ENCODE measurements at regions of chr12 and their contacts with region 1.

Region 1: GRCh38 chr12:123580772-123581171 is 3.6 kb upstream of the TMED2 start:
- H3K4me3 ChIP-seq: no peak overlapping the region
- H3K27ac ChIP-seq: no peak overlapping the region
- H3K4me1 ChIP-seq: 0 out of 2 replicates have a peak, but pooled peaks cover 3% of the 10 kb centered on the region
- CTCF ChIP-seq: no peak

Region 2: GRCh38 chr12:123388177-123388947 is 192.4 kb before region 1 on chr12:
- CTCF ChIA-PET with region 1: interaction called, 10 read pairs
- POLR2A ChIA-PET with region 1: no interaction called
- H3K4me3 ChIP-seq: peak overlapping the region; percentile 52
- H3K27ac ChIP-seq: no peak overlapping the region; the same call in 1 of the 2 replicates
- H3K4me1 ChIP-seq: peaks cover 2% of the 10 kb centered on the region; the same call in 1 of the 2 replicates
- CTCF ChIP-seq: no peak

Region 3: GRCh38 chr12:123427036-123427769 is 153.6 kb before region 1 on chr12:
- CTCF ChIA-PET with region 1: no interaction called
- POLR2A ChIA-PET with region 1: no interaction called
- H3K4me3 ChIP-seq: no peak overlapping the region
- H3K27ac ChIP-seq: no peak overlapping the region
- H3K4me1 ChIP-seq: no peaks in the 10 kb centered on the region
- CTCF ChIP-seq: no peak

Region 4: DNA sequence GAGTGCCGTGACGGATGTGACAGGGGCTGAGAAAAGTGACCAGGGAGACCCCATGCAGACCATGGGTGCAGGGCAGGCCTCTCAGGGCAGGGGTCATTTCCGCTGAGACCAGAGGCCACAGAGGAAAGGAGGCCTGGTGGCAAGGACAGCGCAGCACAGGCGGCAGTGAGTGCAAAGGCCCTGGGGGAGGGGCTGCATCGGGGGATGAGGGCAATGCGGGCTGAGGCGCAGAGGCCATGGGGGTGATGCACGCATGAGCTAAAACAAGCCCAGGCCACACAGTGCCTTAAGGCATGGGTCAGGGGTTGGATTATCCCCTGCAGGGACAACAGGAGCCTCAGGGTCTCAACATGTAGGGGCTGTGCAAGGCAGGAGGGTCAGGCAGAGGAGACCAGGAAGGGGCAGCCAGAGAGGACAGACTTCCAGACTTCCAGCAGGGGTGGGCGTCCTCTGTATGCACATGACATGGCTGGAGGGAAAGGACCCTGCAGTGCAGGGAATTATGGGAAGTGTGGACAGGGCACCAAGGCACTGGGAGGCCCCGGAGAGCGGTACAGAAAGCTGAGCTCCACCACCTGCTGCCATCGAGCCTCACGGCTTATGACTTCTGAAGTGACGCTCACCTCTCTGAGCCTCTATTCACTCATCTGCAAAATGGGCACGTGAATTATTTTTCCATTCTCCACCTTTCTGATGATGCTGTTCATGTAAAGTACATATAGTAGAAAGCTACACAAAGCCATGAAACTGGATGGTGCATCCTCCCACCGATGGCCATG is 74.5 kb before region 1 on chr12:
- CTCF ChIA-PET with region 1: no interaction called
- POLR2A ChIA-PET with region 1: no interaction called
- H3K4me3 ChIP-seq: no peak overlapping the region
- H3K27ac ChIP-seq: no peak overlapping the region
- H3K4me1 ChIP-seq: no peaks in the 10 kb centered on the region
- CTCF ChIP-seq: no peak

Region 5: GRCh38 chr12:123533672-123534643 is 46.8 kb before region 1 on chr12 and contains the start of gene RILPL1:
- CTCF ChIA-PET with region 1: interaction called, 15 read pairs
- POLR2A ChIA-PET with region 1: no interaction called
- H3K4me3 ChIP-seq: peak within 1 kb of the TSS; percentile 65
- H3K27ac ChIP-seq: peak within 1 kb of the TSS; percentile 87
- H3K4me1 ChIP-seq: 0 out of 2 replicates have a peak, but pooled peaks cover 6% of the 10 kb centered on the region
- CTCF ChIP-seq: peak; percentile 65; the same call in 1 of the 2 replicates

Region 6: GRCh38 chr12:123601602-123602489 is 21.1 kb after region 1 on chr12 and contains the start of gene DDX55:
- CTCF ChIA-PET with region 1: no interaction called
- POLR2A ChIA-PET with region 1: no interaction called
- H3K4me3 ChIP-seq: peak within 1 kb of the TSS; percentile 96
- H3K27ac ChIP-seq: peak within 1 kb of the TSS; percentile 69
- H3K4me1 ChIP-seq: no peaks in the 10 kb centered on the region
- CTCF ChIP-seq: peak; percentile 98

Region 7: GRCh38 chr12:123614531-123614930 is 33.8 kb after region 1 on chr12:
- CTCF ChIA-PET with region 1: no interaction called
- POLR2A ChIA-PET with region 1: no interaction called
- H3K4me3 ChIP-seq: no peak overlapping the region
- H3K27ac ChIP-seq: no peak overlapping the region
- H3K4me1 ChIP-seq: no peaks in the 10 kb centered on the region
- CTCF ChIP-seq: no peak